Natural killer cell (primary cell): ENCODE measurements at regions of chr11 and their contacts with region 1.

Region 1: DNA sequence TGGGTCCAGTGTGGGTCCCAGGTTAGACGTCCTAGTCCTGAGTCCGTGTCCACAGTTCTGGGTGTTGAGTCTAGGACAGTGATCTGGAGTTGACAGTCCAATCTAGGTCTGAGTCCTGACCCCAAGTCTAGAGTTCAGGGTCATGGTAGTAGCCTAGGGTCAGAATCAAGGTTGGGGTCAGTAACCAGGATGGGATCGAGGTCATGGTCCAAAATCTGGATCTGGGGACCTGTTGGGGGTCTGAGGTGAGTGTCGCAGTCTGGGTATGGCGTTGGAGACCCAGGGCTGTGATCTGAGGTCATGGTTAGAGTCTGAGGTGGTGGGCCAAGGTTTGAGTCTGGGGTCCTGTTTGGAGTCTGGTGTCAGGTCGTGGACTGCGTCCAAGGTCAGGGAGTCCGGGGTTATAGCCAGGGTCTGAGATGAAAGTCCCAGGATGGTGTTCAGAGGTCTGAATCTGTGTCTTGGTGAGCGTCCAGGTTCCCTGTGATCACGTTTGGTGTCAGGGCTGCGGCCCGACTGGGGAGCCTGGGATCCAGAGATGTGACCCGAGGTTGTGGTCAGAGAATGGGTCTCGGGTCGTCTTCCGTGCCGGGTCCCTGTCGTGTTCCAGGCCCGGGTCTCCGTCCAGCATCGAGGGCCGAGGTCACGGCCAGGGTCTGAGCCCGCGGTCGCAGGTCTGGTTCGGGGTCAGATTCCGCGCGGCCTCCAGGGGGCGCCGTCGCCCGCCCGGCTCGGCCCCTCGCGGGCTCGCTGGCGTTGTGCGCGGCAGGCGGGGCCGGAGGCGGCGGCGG is 445 bp upstream of the GRK2 start:
- DNase-seq: peak; percentile 84 to 89
- ATAC-seq: peak; percentile 46 to 75 (median 57)
- H3K4me3 ChIP-seq: no peak overlapping the region
- H3K4me3 Mint-ChIP-seq: peak overlapping the region; percentile 85
- H3K27ac ChIP-seq: peak overlapping the region; percentile 75
- H3K27ac Mint-ChIP-seq: peak overlapping the region; percentile 87 to 97
- H3K4me1 ChIP-seq: peaks cover 74% of the 10 kb centered on the region
- H3K4me1 Mint-ChIP-seq: peaks cover 57 to 76% of the 10 kb centered on the region in 2 donors
- H3K27me3 ChIP-seq: no peaks in the 10 kb centered on the region
- H3K27me3 Mint-ChIP-seq: peaks cover 0 to 3% of the 10 kb centered on the region in 2 donors
- CTCF ChIP-seq: peak; percentile 59

Region 2: DNA sequence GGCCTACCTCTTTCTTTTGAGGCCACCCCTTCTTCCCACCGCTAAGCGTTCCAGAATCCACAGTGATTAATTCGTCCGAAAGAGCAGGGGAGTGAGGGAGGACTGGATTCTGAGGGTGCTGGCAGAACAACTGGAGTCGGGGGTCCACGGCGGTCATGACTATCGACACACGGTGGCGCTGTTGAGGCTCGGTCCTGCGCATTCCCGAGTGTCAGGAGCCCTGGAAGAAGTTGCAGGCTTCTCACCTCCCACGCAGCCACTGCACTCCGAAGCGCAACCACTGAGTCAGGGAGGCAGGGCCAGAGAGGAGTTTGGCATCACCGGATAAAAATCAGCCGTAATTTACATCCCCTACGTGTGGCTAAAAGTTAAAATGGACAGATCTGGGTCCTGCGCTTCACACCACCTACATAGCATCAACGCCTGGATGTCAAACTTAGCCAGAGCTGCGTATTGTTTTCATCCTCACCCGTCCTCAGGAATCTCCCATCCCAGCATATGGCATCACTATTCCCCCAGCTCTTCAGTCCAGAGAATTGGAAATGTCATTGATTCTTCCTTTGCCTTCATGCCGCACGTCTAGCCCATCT is 686.7 kb before region 1 on chr11:
- intact Hi-C with region 1: no loop called
- DNase-seq: peak; percentile 70 to 88
- ATAC-seq: peak; percentile 77 to 91 (median 84)
- H3K4me3 ChIP-seq: no peak overlapping the region
- H3K4me3 Mint-ChIP-seq: no peak overlapping the region
- H3K27ac ChIP-seq: no peak overlapping the region
- H3K27ac Mint-ChIP-seq: peak overlapping the region in 1 of 2 donors; percentile 29
- H3K4me1 ChIP-seq: peaks cover 6% of the 10 kb centered on the region
- H3K4me1 Mint-ChIP-seq: peaks cover 0 to 11% of the 10 kb centered on the region in 2 donors
- H3K27me3 ChIP-seq: no peaks in the 10 kb centered on the region
- H3K27me3 Mint-ChIP-seq: peaks cover 16 to 23% of the 10 kb centered on the region in 2 donors
- CTCF ChIP-seq: peak; percentile 83

Region 3: GRCh38 chr11:67239783-67240575 is 25.8 kb before region 1 on chr11:
- intact Hi-C with region 1: loop called (anchors 2 kb)
- DNase-seq: peak; percentile 88 to 98
- ATAC-seq: peak; percentile 84 to 96 (median 88)
- H3K4me3 ChIP-seq: peak overlapping the region; percentile 79
- H3K4me3 Mint-ChIP-seq: peak overlapping the region; percentile 98
- H3K27ac ChIP-seq: peak overlapping the region; percentile 95
- H3K27ac Mint-ChIP-seq: peak overlapping the region; percentile 100
- H3K4me1 ChIP-seq: peaks cover 35% of the 10 kb centered on the region
- H3K4me1 Mint-ChIP-seq: peaks cover 55 to 58% of the 10 kb centered on the region in 2 donors
- H3K27me3 ChIP-seq: no peaks in the 10 kb centered on the region
- H3K27me3 Mint-ChIP-seq: no peaks in the 10 kb centered on the region
- CTCF ChIP-seq: no peak

Region 4: DNA sequence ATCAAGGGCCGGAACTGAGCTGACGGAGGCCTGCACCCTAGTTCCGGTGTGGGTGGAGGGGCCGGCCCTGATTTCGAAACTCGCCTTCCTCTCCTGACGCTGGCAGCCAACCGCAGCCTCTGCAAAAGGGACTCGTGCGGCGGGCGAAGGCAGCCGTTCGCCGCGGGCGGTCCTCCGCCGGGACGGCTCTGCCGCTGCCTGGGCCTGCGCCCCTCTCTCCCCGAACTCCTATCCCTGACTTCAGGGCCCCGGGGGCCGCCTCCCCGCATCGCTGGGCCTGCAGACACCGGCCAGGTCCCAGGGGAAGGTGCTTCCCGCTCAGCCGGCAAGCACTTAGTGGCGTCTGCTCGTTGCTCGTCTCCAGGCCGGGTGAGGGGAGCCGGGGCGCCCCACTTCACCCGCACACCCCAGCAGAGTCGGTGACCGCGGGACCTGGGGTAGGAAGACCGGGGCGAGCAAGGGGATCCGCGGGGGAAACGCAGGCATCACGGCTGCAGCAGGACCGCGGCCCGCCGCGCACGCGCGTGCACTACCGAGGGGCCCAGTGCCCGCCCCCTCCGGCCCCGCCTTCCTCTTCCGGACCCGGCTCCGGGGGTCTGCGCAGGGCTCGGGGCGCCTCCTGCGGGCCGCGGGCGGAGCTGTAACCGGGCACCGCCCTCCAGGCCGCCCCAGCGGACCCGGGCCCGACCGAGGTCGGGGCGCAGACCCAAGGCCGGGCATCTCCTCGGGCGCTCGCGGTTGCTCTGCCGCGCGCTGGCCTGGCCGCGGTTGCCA is 22.8 kb after region 1 on chr11:
- intact Hi-C with region 1: loop called (anchors 1 kb)
- DNase-seq: peak; percentile 91 to 94
- ATAC-seq: peak; percentile 68 to 87 (median 73)
- H3K4me3 ChIP-seq: peak overlapping the region; percentile 95
- H3K4me3 Mint-ChIP-seq: peak overlapping the region; percentile 89
- H3K27ac ChIP-seq: peak overlapping the region; percentile 97
- H3K27ac Mint-ChIP-seq: peak overlapping the region; percentile 100
- H3K4me1 ChIP-seq: peaks cover 78% of the 10 kb centered on the region
- H3K4me1 Mint-ChIP-seq: peaks cover 46 to 60% of the 10 kb centered on the region in 2 donors
- H3K27me3 ChIP-seq: no peaks in the 10 kb centered on the region
- H3K27me3 Mint-ChIP-seq: no peaks in the 10 kb centered on the region
- CTCF ChIP-seq: peak; percentile 10

Region 5: GRCh38 chr11:67353317-67354074 is 87.7 kb after region 1 on chr11 and contains the start of gene POLD4:
- intact Hi-C with region 1: no loop called
- DNase-seq: peak; percentile 95 to 96
- ATAC-seq: peak; percentile 82 to 94 (median 89)
- H3K4me3 ChIP-seq: peak within 1 kb of the TSS; percentile 73
- H3K4me3 Mint-ChIP-seq: peak within 1 kb of the TSS; percentile 97
- H3K27ac ChIP-seq: peak within 1 kb of the TSS; percentile 97
- H3K27ac Mint-ChIP-seq: peak within 1 kb of the TSS; percentile 96 to 99
- H3K4me1 ChIP-seq: peaks cover 78% of the 10 kb centered on the region
- H3K4me1 Mint-ChIP-seq: peaks cover 23 to 41% of the 10 kb centered on the region in 2 donors
- H3K27me3 ChIP-seq: no peaks in the 10 kb centered on the region
- H3K27me3 Mint-ChIP-seq: peaks cover 0 to 4% of the 10 kb centered on the region in 2 donors
- CTCF ChIP-seq: no peak
- total RNA-seq, gene POLD4: 45.8 to 63.7 (median 60.5) TPM

Region 6: DNA sequence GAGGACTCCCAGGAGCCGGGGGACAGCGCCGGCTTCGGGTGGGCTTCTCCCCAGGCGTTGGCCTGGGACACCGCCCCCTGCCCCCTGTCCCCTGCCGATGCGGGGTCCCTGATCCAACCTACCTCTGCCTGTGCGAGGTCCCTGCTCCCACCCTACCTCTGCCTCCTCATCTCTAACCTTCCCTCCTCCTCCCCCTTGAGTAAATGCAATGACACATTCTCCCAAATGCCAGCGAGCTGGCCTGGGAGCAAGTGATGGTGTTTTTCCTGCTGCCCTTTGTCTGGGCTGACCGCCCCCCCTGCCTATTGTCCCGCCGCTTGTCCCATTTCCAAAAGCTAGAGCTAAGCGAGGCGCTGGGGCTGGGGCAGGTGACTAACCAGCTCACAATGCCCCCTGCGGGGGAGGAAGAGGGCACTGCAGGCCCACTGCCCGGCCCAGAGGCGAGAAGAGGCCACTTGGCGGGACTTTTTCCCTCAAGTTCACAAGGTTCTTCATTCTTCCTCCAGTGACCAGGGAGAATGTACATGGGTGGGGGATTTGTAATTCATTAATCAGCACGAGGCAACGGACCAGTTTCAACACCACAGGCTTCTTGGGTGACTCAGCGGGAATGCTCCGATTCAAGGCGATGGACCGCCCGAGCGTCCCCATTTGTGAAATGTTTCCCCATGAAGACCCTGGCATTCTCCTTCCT is 108.2 kb after region 1 on chr11:
- intact Hi-C with region 1: loop called (anchors 5 kb)
- DNase-seq: peak; percentile 61 to 73
- ATAC-seq: peak; percentile 45 to 60 (median 51)
- H3K4me3 ChIP-seq: peak overlapping the region; percentile 29
- H3K4me3 Mint-ChIP-seq: peak overlapping the region; percentile 77
- H3K27ac ChIP-seq: peak overlapping the region; percentile 43
- H3K27ac Mint-ChIP-seq: peak overlapping the region; percentile 88 to 89
- H3K4me1 ChIP-seq: peaks cover 48% of the 10 kb centered on the region
- H3K4me1 Mint-ChIP-seq: peaks cover 35 to 45% of the 10 kb centered on the region in 2 donors
- H3K27me3 ChIP-seq: peaks cover 3% of the 10 kb centered on the region
- H3K27me3 Mint-ChIP-seq: no peaks in the 10 kb centered on the region
- CTCF ChIP-seq: peak; percentile 35

Region 7: DNA sequence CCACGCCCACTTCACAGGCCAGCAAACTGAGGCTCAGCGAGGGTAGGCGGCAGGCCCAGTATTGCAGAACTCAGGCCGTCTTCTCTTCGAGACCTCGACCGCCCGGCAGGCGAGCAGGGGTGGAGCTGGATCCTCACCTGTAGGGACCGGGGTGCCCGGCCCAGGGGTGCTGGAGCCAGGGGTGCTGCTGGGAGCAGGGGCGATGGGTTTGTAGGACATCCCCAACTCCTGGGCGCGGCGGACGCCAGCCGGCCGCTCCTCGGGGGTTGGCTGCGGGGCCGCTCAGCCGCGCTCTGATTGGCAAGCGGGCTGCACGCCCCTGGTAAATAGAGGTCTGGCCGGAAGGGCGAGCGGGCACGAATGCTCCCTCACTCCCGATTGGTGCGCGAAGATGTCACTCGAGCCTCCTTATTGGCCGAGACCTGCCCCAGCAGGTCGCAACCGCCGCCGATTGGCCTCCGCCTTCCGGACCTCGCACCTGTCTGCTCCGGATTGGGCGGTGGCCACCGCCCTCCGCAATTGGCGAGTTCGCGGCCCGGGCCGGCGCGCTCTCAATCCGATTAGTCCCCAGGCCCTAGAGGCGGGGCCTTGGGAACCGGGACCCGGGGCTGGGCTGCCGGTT is 242.1 kb after region 1 on chr11 and contains the start of gene CDK2AP2:
- intact Hi-C with region 1: loop called (anchors 5 kb)
- DNase-seq: peak; percentile 94 to 98
- ATAC-seq: peak; percentile 70 to 88 (median 78)
- H3K4me3 ChIP-seq: peak within 1 kb of the TSS; percentile 57
- H3K4me3 Mint-ChIP-seq: peak within 1 kb of the TSS; percentile 83
- H3K27ac ChIP-seq: peak within 1 kb of the TSS; percentile 97
- H3K27ac Mint-ChIP-seq: peak within 1 kb of the TSS; percentile 95 to 97
- H3K4me1 ChIP-seq: peaks cover 43% of the 10 kb centered on the region
- H3K4me1 Mint-ChIP-seq: peaks cover 27 to 50% of the 10 kb centered on the region in 2 donors
- H3K27me3 ChIP-seq: no peaks in the 10 kb centered on the region
- H3K27me3 Mint-ChIP-seq: peaks cover 7% of the 10 kb centered on the region in 2 donors
- CTCF ChIP-seq: no peak
- total RNA-seq, gene CDK2AP2: 57.9 to 67.7 (median 65.5) TPM

Region 8: GRCh38 chr11:67732045-67732787 is 466.4 kb after region 1 on chr11:
- intact Hi-C with region 1: no loop called
- DNase-seq: peak; percentile 23 to 87
- ATAC-seq: peak; percentile 62 to 95 (median 94)
- H3K4me3 ChIP-seq: no peak overlapping the region
- H3K4me3 Mint-ChIP-seq: peak overlapping the region; percentile 17
- H3K27ac ChIP-seq: no peak overlapping the region
- H3K27ac Mint-ChIP-seq: peak overlapping the region in 1 of 2 donors; percentile 70
- H3K4me1 ChIP-seq: peaks cover 8% of the 10 kb centered on the region
- H3K4me1 Mint-ChIP-seq: peaks cover 6 to 14% of the 10 kb centered on the region in 2 donors
- H3K27me3 ChIP-seq: peaks cover 2% of the 10 kb centered on the region
- H3K27me3 Mint-ChIP-seq: peaks cover 20 to 38% of the 10 kb centered on the region in 2 donors
- CTCF ChIP-seq: peak; percentile 44